PC-9 (cell line): ENCODE measurements at regions of chr11 and their contacts with region 1.

Region 1: DNA sequence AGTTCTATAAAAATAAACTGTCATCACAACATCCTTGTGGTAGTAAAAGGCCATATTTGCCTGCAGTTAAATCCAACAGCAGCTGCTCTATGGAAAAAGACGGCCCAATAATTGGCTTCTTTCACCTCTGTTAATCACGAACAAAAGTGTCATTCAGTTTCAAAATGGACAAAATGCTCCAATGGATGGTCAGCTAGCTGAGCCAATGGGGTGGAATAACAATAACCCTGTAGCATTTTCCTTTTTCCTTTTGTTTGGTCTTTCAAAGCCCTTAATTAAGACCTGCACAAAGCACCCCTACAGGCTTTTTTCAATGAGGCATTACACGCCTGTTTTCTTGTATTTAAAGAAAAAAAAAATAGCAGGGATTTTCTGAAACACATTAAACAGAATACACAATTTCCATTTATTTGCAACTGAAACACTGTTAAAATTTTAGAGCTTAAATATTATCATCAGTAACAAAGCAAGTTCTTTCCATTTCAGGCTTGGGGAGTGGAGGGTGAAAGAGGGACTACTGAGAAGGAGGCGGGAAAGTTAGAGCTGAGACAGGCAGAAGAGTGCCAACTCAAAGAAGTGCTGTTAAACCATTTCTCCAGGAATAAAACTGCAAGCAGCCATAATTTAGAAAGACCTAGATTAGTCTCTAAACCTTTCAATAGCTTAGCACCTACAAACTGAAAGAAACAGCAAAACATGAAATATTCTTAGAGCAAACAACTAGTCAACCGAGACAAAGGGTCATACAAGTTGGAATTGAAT is 28.7 kb downstream of the LGR4 start:
- DNase-seq: no peak
- H3K4me3 ChIP-seq: no peak overlapping the region
- H3K27ac ChIP-seq: no peak overlapping the region
- H3K4me1 ChIP-seq: peaks cover 36% of the 10 kb centered on the region
- H3K27me3 ChIP-seq: no peaks in the 10 kb centered on the region
- CTCF ChIP-seq: no peak

Region 2: DNA sequence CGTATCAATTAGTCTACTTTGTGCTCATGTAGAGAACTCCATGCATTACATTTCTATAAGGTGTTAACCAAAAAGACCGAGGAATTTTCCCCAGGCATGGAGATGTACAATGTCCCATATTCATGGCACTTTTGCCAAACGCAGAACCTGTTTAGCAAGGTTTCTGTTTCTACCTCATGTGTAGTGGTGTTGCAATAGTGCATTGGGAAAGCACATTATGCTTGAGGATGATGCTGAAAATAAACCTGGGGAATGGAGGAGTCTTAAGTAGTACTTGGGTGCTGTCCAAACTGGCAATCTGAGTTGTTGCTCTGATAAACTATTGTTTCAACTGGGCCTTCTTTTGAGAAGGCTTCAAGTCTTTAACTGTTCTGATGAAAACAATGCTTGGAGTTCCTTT is 860.4 kb before region 1 on chr11:
- CTCF ChIA-PET with region 1: no interaction called
- POLR2A ChIA-PET with region 1: interaction called, 12 read pairs
- intact Hi-C with region 1: no loop called
- DNase-seq: peak; percentile 38 to 82
- H3K4me3 ChIP-seq: no peak overlapping the region
- H3K27ac ChIP-seq: no peak overlapping the region
- H3K4me1 ChIP-seq: peaks cover 54% of the 10 kb centered on the region
- H3K27me3 ChIP-seq: no peaks in the 10 kb centered on the region
- CTCF ChIP-seq: no peak

Region 3: GRCh38 chr11:27216270-27217149 is 227.4 kb before region 1 on chr11:
- CTCF ChIA-PET with region 1: no interaction called
- POLR2A ChIA-PET with region 1: no interaction called
- intact Hi-C with region 1: loop called (anchors 5 kb)
- DNase-seq: no peak
- H3K4me3 ChIP-seq: no peak overlapping the region
- H3K27ac ChIP-seq: no peak overlapping the region
- H3K4me1 ChIP-seq: peaks cover 39% of the 10 kb centered on the region
- H3K27me3 ChIP-seq: no peaks in the 10 kb centered on the region
- CTCF ChIP-seq: no peak

Region 4: GRCh38 chr11:27392278-27393114 is 51.4 kb before region 1 on chr11:
- CTCF ChIA-PET with region 1: no interaction called
- POLR2A ChIA-PET with region 1: no interaction called
- intact Hi-C with region 1: no loop called
- DNase-seq: peak; percentile 25 to 88
- H3K4me3 ChIP-seq: no peak overlapping the region; the same call in 1 of the 2 replicates
- H3K27ac ChIP-seq: peak overlapping the region; percentile 66
- H3K4me1 ChIP-seq: peaks cover 75% of the 10 kb centered on the region
- H3K27me3 ChIP-seq: no peaks in the 10 kb centered on the region
- CTCF ChIP-seq: no peak

Region 5: GRCh38 chr11:27408246-27408800 is 35.6 kb before region 1 on chr11:
- CTCF ChIA-PET with region 1: no interaction called
- POLR2A ChIA-PET with region 1: interaction called, 13 read pairs
- intact Hi-C with region 1: no loop called
- DNase-seq: no peak
- H3K4me3 ChIP-seq: no peak overlapping the region
- H3K27ac ChIP-seq: no peak overlapping the region
- H3K4me1 ChIP-seq: no peaks in the 10 kb centered on the region
- H3K27me3 ChIP-seq: no peaks in the 10 kb centered on the region
- CTCF ChIP-seq: no peak

Region 6: DNA sequence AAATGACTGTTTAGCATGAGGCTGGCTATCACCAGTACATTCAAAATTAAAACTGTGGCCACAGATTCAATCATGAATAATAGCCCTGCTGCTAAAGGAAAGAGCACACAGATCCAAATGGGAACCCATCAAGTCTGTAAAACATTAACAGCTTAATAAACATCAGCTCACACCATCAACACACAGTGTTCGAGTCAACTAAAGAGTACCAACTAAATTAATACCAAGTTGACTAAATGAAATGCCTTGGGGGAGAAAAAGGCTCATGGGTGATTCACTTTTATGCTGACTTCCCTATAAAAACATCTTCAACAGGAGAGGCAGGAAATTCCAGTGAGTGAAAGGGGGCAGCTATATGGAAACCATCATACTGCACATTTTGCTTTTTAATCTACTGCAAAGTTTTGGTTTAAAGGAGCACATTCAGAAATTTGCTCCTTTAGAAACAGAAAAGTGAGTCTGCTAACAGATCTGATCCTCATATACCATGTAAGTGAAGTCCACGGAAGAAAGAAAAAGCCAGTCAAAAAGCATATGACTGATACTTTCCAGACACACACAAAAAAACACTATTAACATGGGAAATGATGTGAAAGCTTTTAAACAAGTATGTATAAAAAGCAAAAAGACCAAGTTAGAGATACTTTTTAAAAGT is 12.3 kb after region 1 on chr11:
- CTCF ChIA-PET with region 1: no interaction called
- POLR2A ChIA-PET with region 1: no interaction called
- intact Hi-C with region 1: loop called (anchors 1 kb)
- DNase-seq: peak in 1 of 2 experiments; percentile 67
- H3K4me3 ChIP-seq: no peak overlapping the region
- H3K27ac ChIP-seq: peak overlapping the region; percentile 55
- H3K4me1 ChIP-seq: peaks cover 55% of the 10 kb centered on the region
- H3K27me3 ChIP-seq: no peaks in the 10 kb centered on the region
- CTCF ChIP-seq: no peak

Region 7: GRCh38 chr11:27464154-27464759 is 20.3 kb after region 1 on chr11:
- CTCF ChIA-PET with region 1: interaction called, 4 read pairs
- POLR2A ChIA-PET with region 1: interaction called, 20 read pairs
- intact Hi-C with region 1: loop called (anchors 1 kb)
- DNase-seq: peak; percentile 47 to 97
- H3K4me3 ChIP-seq: peak overlapping the region; percentile 34; the same call in 1 of the 2 replicates
- H3K27ac ChIP-seq: peak overlapping the region; percentile 97
- H3K4me1 ChIP-seq: peaks cover 69% of the 10 kb centered on the region
- H3K27me3 ChIP-seq: no peaks in the 10 kb centered on the region
- CTCF ChIP-seq: no peak